Activated naive CD4-positive, alpha-beta T cell treated with anti-CD3 and anti-CD28 coated beads for 36 hours (primary cell): ENCODE measurements at regions of chr12 and their contacts with region 1.

Region 1: DNA sequence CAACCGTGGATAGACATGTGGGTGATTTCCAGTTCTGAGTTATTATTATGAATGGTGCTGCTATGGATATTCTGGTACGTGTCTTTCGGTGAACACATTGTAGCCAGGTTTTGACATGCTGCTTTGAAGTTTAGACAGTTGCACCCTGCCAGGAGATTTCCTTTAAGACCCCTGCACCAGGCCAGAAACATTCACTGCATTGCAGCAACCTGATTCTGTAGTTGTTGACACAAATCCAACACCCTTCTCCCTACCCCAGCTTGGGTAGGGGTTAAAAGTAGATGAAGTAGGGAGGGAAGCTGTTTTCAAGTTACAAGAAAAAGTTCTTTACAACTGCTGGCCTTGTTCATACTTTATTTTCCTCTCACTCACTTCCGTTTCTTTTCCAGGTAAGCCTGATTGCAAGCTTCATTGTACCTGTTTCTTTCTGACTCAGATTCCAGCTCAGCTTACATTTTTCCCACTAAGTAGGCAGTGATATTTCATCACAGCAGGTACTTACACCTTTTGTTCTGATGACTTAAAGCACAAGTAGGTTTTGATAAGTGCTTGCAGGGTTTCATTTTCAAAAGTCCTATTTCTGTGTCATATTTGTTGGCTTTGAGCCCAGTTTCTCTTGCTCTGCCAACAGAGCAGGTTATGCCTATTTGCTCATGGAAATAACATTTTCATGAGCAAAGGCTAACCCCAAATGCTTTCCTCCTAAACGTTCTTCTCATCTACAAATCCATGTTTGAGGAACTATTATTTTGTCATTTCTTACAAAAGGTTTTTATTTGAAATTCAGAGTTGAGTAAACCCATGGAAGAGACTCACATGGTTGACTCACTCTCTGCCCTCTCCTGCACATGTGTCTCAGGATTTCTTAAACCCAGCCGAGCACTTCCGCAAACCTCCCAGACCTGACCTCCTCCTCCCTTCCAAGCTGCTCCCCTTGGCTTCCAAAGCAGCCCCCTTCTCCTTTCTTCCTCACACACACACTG is 12.1 kb upstream of the LTA4H start:
- DNase-seq: peak; percentile 29
- H3K4me3 Mint-ChIP-seq: peak overlapping the region; percentile 54
- H3K27ac Mint-ChIP-seq: peak overlapping the region; percentile 84
- H3K4me1 Mint-ChIP-seq: peaks cover 52% of the 10 kb centered on the region
- H3K27me3 Mint-ChIP-seq: no peaks in the 10 kb centered on the region

Region 2: GRCh38 chr12:95102916-95103671 is 944.4 kb before region 1 on chr12:
- CTCF ChIA-PET with region 1: no interaction called
- intact Hi-C with region 1: loop called (anchors 5 kb)
- DNase-seq: peak; percentile 70
- H3K4me3 Mint-ChIP-seq: no peak overlapping the region
- H3K27ac Mint-ChIP-seq: no peak overlapping the region
- H3K4me1 Mint-ChIP-seq: peaks cover 10% of the 10 kb centered on the region
- H3K27me3 Mint-ChIP-seq: no peaks in the 10 kb centered on the region

Region 3: DNA sequence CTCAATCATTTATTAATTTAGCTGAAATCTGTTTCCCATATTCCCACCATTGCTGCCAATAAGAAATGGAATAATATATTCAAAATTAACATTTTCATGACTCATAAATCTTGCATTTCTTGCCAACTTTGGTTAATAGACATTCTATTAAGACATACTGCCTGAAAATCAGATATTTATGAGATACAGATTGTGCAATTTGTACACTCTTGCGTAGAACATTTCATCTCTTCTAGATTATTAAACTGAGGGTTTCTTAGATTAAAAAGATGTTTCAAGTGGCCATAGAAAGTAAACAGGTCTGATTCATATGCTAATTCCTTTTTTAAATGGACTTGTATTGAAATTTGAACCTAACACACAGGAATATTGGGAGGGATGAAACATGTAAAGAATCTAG is 21.2 kb before region 1 on chr12:
- CTCF ChIA-PET with region 1: no interaction called
- intact Hi-C with region 1: no loop called
- DNase-seq: no peak
- H3K4me3 Mint-ChIP-seq: no peak overlapping the region
- H3K27ac Mint-ChIP-seq: no peak overlapping the region
- H3K4me1 Mint-ChIP-seq: peaks cover 23% of the 10 kb centered on the region
- H3K27me3 Mint-ChIP-seq: no peaks in the 10 kb centered on the region

Region 4: DNA sequence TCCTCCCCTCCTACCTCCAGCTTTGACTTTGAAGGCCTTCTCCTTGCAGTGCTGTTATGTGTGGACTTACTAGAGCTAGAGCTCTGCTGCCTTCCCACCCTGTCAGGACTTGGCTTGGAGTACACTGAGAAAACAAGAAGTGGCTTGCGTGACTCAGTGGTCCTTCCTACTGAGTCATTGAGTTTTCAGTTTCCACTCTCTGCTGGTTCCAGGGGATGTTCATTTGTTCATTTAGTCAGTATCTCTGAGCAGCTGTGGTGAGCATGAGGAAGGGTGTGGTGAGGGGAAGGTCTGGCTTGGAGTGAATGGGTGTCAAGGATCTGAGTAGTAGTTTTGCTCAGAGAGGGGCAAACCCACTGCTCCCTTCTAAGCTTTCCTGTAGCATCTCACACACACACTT is 129.5 kb after region 1 on chr12:
- CTCF ChIA-PET with region 1: no interaction called
- intact Hi-C with region 1: loop called (anchors 1 kb)
- DNase-seq: peak; percentile 91
- H3K4me3 Mint-ChIP-seq: no peak overlapping the region
- H3K27ac Mint-ChIP-seq: peak overlapping the region; percentile 82
- H3K4me1 Mint-ChIP-seq: peaks cover 17% of the 10 kb centered on the region
- H3K27me3 Mint-ChIP-seq: no peaks in the 10 kb centered on the region

Region 5: DNA sequence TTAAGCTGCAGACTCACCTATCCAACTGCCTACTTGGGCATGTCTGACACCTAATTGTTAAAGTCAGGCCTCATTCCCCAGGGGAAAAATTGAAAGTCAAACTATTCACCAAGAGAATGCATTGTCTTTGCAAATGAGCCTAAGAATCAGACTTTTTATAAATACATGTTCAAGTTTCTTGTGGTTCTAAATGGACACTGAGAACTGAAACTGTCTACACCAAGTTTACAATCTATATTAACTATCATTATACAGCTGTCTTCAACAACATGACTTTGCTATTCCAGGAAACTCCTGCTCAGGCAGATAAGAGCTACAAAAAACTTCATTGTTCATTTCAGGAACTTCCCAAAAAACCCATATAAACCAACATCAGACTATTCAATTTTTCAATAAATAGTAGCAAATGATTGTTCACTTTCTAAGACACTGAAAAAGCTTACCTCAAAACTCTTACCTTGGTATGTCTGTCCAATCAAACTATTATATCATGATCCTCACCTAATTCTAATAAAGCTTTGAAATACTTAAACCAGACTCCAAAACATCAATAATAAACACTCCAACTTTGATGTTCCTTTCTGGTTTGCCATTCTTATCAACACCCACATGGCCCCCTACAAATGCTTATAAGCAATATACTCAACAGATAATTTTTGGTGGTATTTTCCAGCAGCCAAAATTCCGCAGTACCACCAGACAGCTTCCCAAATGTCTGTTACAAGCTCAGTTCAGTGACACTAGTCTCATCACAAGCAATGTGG is 328.5 kb after region 1 on chr12:
- CTCF ChIA-PET with region 1: no interaction called
- intact Hi-C with region 1: loop called (anchors 1 kb)
- DNase-seq: no peak
- H3K4me3 Mint-ChIP-seq: no peak overlapping the region
- H3K27ac Mint-ChIP-seq: peak overlapping the region; percentile 96
- H3K4me1 Mint-ChIP-seq: peaks cover 82% of the 10 kb centered on the region
- H3K27me3 Mint-ChIP-seq: no peaks in the 10 kb centered on the region

Region 6: DNA sequence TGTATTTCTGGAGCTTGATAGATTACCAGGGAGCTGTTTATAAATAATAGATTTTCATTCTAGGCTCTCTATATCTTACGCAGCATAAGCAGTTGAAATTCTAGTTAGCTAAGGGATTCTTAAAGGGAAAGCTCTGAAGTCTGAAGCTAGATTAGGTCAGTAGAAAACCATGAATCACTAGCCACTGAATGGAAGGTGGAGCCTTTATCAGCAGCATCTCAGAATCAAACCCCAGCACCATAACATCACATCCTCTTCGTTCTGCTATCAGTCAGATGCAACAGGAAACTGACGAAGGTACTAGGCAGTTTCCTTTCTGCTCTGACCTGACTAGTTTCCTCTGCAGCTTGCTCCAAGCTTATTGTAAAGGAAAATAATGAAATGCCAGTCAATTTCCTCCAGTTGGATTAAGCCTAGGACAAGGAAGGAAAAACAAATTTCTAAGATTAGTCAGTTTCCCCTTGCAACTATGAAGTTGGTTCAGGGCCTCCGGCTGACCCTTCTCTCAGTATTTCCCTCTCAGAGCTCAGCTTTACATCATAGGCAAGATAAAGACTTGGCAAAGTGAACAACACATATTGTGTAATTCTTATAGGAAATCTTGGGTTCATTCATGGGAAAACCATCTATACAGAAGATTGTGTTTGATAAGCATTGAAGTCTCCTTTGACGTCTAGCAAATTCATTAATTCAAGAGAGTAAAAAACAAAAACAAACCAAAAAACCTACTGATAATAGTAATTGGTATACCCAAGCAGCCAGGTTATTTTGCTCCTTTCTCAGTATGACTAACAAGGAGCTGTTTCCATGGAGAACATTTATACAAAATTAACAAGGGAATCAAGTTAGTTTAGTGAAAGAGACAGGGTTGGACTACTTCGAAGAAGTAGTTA is 398.4 kb after region 1 on chr12:
- CTCF ChIA-PET with region 1: no interaction called
- intact Hi-C with region 1: loop called (anchors 1 kb)
- DNase-seq: peak; percentile 68
- H3K4me3 Mint-ChIP-seq: peak overlapping the region; percentile 28
- H3K27ac Mint-ChIP-seq: peak overlapping the region; percentile 94
- H3K4me1 Mint-ChIP-seq: peaks cover 39% of the 10 kb centered on the region
- H3K27me3 Mint-ChIP-seq: no peaks in the 10 kb centered on the region

Region 7: GRCh38 chr12:96516472-96517430 is 469.2 kb after region 1 on chr12:
- CTCF ChIA-PET with region 1: no interaction called
- intact Hi-C with region 1: loop called (anchors 5 kb)
- DNase-seq: peak; percentile 96
- H3K4me3 Mint-ChIP-seq: peak overlapping the region; percentile 2
- H3K27ac Mint-ChIP-seq: peak overlapping the region; percentile 25
- H3K4me1 Mint-ChIP-seq: peaks cover 16% of the 10 kb centered on the region
- H3K27me3 Mint-ChIP-seq: no peaks in the 10 kb centered on the region